ENCODE measurements at regions of chr1 and their contacts with region 1.

Region 1: DNA sequence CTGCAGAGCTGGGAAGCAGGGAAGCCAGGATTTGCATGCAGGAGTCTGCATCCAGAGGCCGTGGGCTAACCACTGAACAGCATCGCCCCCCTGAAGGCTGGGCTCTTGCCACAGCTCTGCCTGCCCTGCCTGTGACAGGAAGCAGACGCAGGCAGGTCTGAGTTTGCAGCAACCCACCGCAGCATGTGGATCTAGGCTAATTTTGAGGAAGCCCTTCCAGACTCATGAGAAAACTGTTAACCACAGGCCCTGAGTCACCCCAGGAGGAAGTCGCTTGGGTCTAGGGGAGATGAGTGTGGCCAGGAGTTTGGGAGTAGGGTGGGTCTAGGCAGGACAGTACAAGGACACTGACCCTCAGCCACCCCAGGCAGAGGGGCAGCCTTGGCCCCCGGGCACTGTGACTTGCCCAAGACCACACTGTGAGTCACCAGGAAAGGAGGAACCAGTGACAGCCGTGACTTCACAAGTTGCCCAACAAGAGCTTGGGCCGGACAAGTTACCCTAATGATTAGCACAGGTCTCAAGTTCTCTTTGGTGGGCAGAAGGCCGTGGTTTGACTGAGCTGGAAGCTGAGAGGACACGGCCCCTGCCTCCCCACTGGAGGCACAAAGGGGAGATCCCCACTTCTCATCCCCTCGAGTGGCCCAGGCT is 904 bp downstream of the LAPTM5 start:
- DNase-seq: peak; percentile 48 to 91 (median 71)
- ATAC-seq: peak; percentile 64
- H3K4me3 ChIP-seq: peak overlapping the region; percentile 99
- H3K4me3 Mint-ChIP-seq: peak overlapping the region; percentile 96
- H3K27ac ChIP-seq: peak overlapping the region; percentile 95 to 97
- H3K27ac Mint-ChIP-seq: peak overlapping the region; percentile 96
- H3K4me1 ChIP-seq: peaks cover 91% of the 10 kb centered on the region
- H3K4me1 Mint-ChIP-seq: peaks cover 98% of the 10 kb centered on the region
- H3K27me3 ChIP-seq: no peaks in the 10 kb centered on the region
- H3K27me3 Mint-ChIP-seq: no peaks in the 10 kb centered on the region
- CTCF ChIP-seq: no peak

Region 2: GRCh38 chr1:30738040-30738714 is 18.5 kb before region 1 on chr1:
- CTCF ChIA-PET with region 1: interaction called, 43 read pairs
- POLR2A ChIA-PET with region 1: interaction called, 457 read pairs
- intact Hi-C with region 1: no loop called
- DNase-seq: no peak
- ATAC-seq: no peak
- H3K4me3 ChIP-seq: no peak overlapping the region
- H3K4me3 Mint-ChIP-seq: peak overlapping the region; percentile 32
- H3K27ac ChIP-seq: peak overlapping the region in 1 of 2 donors; percentile 35
- H3K27ac Mint-ChIP-seq: peak overlapping the region; percentile 96
- H3K4me1 ChIP-seq: peaks cover 55% of the 10 kb centered on the region
- H3K4me1 Mint-ChIP-seq: peaks cover 57% of the 10 kb centered on the region
- H3K27me3 ChIP-seq: no peaks in the 10 kb centered on the region
- H3K27me3 Mint-ChIP-seq: no peaks in the 10 kb centered on the region
- CTCF ChIP-seq: no peak

Region 3: GRCh38 chr1:30743584-30744059 is 13.0 kb before region 1 on chr1:
- CTCF ChIA-PET with region 1: interaction called, 43 read pairs
- POLR2A ChIA-PET with region 1: interaction called, 457 read pairs
- intact Hi-C with region 1: loop called in 1 of 2 experiments (anchors 1 kb)
- DNase-seq: peak; percentile 50 to 93 (median 64)
- ATAC-seq: peak; percentile 81
- H3K4me3 ChIP-seq: peak overlapping the region; percentile 42
- H3K4me3 Mint-ChIP-seq: peak overlapping the region; percentile 83
- H3K27ac ChIP-seq: peak overlapping the region; percentile 95 to 97
- H3K27ac Mint-ChIP-seq: peak overlapping the region; percentile 96
- H3K4me1 ChIP-seq: peaks cover 99% of the 10 kb centered on the region
- H3K4me1 Mint-ChIP-seq: peaks cover 100% of the 10 kb centered on the region
- H3K27me3 ChIP-seq: no peaks in the 10 kb centered on the region
- H3K27me3 Mint-ChIP-seq: no peaks in the 10 kb centered on the region
- CTCF ChIP-seq: no peak